ENCODE measurements at regions of chr3 and their contacts with region 1.

Region 1: DNA sequence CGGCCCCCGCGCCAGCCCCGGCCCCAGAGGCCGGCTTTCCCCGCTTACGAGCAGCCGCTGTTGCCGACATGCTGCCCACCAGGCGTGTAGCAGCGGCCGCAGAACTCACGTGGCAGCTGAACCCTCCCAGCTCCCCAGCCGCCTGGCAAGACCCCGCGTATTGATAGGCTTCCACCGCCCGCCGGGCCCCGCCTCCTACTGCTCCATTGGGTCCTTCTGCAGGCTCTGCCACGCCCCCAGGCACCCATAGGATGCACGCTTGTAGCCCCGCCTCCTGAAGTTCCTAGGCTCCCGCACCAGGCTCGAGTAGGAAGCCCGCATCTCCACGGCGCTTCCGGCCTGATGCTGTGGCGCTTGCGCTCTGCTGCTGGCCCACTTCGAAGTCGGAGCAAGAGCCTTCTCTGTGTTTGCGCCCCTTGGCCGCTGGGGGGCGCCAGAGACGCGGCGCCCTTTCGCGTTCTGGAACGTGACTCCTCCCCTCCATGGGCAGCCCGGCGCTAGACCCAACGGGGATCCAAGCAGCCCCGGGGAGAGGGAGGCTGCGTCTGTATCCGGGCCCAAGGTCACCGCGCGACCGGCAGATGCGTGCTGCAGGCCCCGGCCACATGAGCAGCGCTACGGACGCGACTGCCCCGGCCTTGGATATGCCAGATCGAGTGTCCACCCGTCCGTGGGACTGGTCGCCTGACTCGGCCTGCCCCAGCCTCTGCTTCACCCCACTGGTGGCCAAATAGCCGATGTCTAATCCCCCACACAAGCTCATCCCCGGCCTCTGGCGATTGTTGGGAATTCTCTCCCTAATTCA is at the starts of genes PARP3 and RRP9:
- DNase-seq: peak; percentile 100
- ATAC-seq: peak; percentile 90 to 94
- H3K4me3 ChIP-seq: peak within 1 kb of the TSS; percentile 83 to 94 (median 90)
- H3K27ac ChIP-seq: peak within 1 kb of the TSS; percentile 92 to 100 (median 95)
- H3K4me1 ChIP-seq: peaks cover 23 to 29% of the 10 kb centered on the region in 2 donors
- H3K27me3 ChIP-seq: no peaks in the 10 kb centered on the region
- CTCF ChIP-seq: peak; percentile 98 to 100 (median 100)
- POLR2A ChIP-seq: peak; percentile 75 to 81
- total RNA-seq, gene PARP3: 10.9 to 19.0 (median 11.4) TPM
- total RNA-seq, gene RRP9: 19.2 to 25.9 (median 24.9) TPM

Region 2: GRCh38 chr3:51955893-51956770 is 14.1 kb after region 1 on chr3:
- in situ Hi-C with region 1: no loop called
- intact Hi-C with region 1: loop called (anchors 1 kb)
- DNase-seq: peak in 1 of 2 donors; percentile 73
- ATAC-seq: peak; percentile 75
- H3K4me3 ChIP-seq: peak overlapping the region; percentile 33 to 61 (median 48)
- H3K27ac ChIP-seq: peak overlapping the region; percentile 67 to 85 (median 84)
- H3K4me1 ChIP-seq: peaks cover 10 to 24% of the 10 kb centered on the region in 2 donors
- H3K27me3 ChIP-seq: no peaks in the 10 kb centered on the region
- CTCF ChIP-seq: peak; percentile 43 to 74 (median 58)
- POLR2A ChIP-seq: no peak

Region 3: DNA sequence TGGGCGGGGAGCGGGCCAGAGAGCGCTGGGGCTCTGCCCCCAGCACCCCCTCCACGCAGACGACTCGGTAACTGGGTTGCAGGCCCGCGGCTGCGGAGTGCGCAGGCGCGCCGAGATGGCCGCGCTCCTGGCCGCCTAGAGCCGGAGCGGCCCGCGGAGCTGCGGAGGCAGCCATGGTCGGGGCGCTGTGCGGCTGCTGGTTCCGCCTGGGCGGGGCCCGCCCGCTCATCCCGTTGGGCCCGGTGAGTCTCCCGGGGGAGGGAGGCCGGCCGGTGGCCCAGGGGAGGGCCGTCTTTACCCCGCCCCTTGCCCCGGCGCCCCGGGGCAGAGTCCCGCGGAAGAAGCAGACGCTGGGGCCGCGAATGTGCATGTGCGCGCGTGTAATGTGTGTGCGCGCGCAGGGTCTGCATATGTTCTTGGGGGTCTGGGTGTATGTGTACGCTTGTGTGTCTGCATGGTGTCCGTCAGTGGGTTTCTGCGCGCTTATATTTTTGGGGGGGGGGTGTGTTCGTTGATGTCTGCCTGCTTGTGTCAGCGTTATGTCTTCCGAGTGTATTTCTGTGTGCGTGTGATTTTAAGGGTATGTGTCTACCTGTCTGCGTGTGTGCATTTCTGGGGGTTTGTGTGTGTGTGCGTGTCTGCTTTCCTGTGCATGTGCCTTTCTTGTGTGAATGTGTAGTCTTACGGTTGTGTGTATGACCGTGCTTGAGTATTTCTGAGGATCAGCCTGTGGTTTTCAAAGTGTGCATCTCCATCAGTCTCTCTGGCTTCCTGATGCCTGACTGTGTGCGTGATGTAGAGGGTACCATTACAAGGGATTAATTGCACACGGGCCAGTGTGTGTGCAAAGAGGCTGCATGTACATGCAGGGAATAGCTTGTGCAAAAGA is 33.2 kb after region 1 on chr3 and contains the start of gene ABHD14A:
- in situ Hi-C with region 1: no loop called
- intact Hi-C with region 1: loop called (anchors 1 kb)
- DNase-seq: peak in 1 of 2 donors; percentile 66
- ATAC-seq: peak; percentile 53 to 59
- H3K4me3 ChIP-seq: peak within 1 kb of the TSS; percentile 77 to 99 (median 84)
- H3K27ac ChIP-seq: peak within 1 kb of the TSS; percentile 96 to 100 (median 99)
- H3K4me1 ChIP-seq: peaks cover 21 to 27% of the 10 kb centered on the region in 2 donors
- H3K27me3 ChIP-seq: no peaks in the 10 kb centered on the region
- CTCF ChIP-seq: no peak
- POLR2A ChIP-seq: peak; percentile 29 to 59
- total RNA-seq, gene ABHD14A: 8.7 to 37.9 (median 29.9) TPM

Region 4: DNA sequence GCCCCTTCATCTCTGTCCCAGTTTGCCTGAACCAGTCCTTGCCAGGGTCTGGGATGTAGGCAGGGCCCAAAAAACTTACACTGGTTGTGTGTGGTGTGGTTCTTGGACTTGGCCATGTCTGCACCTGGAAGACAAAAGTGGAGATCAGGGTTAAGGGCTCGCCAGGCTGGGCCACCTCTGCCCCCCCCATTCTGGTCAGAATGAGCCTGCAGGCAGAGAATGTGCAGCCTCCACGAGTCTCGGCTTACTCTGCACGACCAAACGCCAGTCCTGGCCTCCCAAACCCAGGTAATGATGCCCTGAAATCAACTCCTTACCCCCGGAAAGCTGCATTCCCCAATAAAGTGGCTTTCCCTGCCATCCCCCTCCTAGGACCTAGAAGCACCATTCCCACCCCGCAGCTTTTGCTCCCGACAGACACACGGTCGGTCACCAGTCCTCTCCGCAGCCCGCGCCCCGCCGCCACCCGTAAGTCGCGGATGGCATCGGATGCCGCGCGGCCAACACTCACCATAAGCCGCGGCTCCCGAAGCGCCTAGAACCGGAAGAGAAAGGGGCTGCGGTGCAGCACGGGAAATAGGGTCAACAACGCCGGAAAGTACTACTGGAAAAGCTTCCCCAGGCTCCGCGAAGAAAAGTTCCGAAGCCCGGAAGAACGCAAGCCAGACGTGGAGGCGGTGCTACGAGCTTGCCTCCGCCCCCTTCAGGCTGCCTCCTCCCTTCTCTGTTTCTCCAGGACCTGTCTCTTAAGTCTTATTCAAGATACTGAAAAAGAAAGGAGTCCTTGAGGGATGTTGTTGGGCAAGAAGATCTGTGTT is 53.6 kb after region 1 on chr3 and contains the start of gene RPL29:
- in situ Hi-C with region 1: loop called in 2 of 4 experiments (anchors 10 kb)
- intact Hi-C with region 1: no loop called
- DNase-seq: peak; percentile 85 to 92
- ATAC-seq: peak; percentile 99
- H3K4me3 ChIP-seq: peak within 1 kb of the TSS; percentile 80 to 91 (median 87)
- H3K27ac ChIP-seq: peak within 1 kb of the TSS; percentile 84 to 89 (median 88)
- H3K4me1 ChIP-seq: peaks cover 14 to 26% of the 10 kb centered on the region in 2 donors
- H3K27me3 ChIP-seq: no peaks in the 10 kb centered on the region
- CTCF ChIP-seq: peak in 3 of 5 experiments; percentile 43 to 50 (median 44)
- POLR2A ChIP-seq: peak; percentile 75 to 85
- total RNA-seq, gene RPL29: 1,885 to 2,483 (median 2,154) TPM

Region 5: DNA sequence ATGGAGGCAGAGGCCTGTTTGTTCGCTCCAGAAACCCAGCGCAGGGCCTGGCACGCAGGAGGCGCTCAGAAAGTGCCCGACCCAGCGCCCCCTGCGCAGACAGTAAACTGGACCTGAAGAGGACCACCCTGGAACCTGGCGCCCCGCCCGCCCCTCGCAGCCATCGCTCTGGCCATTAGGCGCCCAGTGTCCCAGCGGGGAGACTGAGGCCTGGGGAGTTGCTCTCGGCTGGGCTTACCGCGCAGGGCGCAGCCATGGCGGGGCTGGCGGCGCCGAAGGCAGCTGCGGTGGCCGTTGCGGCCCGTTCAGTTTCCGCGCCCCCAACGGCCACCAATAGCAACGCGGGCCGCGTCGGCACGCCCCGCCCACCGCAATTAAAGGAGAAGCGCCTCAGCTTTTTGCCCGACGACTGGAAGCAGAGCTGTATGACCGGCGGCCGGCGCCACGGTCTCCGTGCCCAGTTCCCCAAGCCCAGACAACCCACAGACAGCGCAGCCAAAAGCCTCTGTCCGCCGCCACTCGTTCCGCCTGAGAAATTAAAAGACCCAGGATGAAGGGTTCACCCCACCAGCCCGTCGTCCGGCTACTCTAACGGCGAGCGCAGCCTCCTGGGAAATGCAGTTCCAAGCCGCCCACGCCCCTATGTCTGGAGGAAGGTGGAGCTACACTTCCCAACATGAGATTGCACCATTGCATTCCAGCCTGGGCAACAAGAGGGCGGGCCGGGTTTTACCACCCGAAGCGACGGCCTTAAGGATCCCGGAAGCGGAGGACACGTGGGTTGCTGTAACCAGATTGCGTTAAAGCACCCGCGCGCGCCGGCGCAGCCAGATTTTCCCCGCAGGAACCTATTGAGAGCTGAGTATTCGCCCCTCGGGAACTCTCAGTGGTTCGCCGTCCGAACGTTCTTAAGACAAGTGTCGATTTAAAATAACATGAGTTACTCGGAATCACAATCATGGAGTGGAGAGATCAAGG is 212.4 kb after region 1 on chr3 and contains the start of gene POC1A:
- in situ Hi-C with region 1: no loop called
- intact Hi-C with region 1: loop called (anchors 1 kb)
- DNase-seq: peak; percentile 97 to 99
- ATAC-seq: peak; percentile 99
- H3K4me3 ChIP-seq: peak within 1 kb of the TSS; percentile 65 to 87 (median 82)
- H3K27ac ChIP-seq: peak within 1 kb of the TSS; percentile 84 to 97 (median 96)
- H3K4me1 ChIP-seq: peaks cover 8 to 10% of the 10 kb centered on the region in 2 donors
- H3K27me3 ChIP-seq: no peaks in the 10 kb centered on the region
- CTCF ChIP-seq: peak in 4 of 5 experiments; percentile 30 to 46 (median 40)
- POLR2A ChIP-seq: peak; percentile 61 to 87
- total RNA-seq, gene POC1A: 0.51 to 3.2 (median 0.81) TPM

Measured in gastrocnemius medialis (tissue), 4 donors.